WTC11 (cell line): ENCODE measurements at regions of chr13 and their contacts with region 1.

Region 1: GRCh38 chr13:61891401-61891800 is 475.8 kb upstream of the PCDH20 start:
- DNase-seq: no peak
- ATAC-seq: no peak
- H3K4me3 Mint-ChIP-seq: no peak overlapping the region
- H3K27ac Mint-ChIP-seq: 0 out of 2 replicates have a peak overlapping the region, but pooled peaks have one; percentile 79
- H3K4me1 Mint-ChIP-seq: peaks cover 14% of the 10 kb centered on the region
- H3K27me3 Mint-ChIP-seq: no peaks in the 10 kb centered on the region
- CTCF ChIP-seq: no peak

Region 2: GRCh38 chr13:61812286-61812685 is 79.1 kb before region 1 on chr13:
- CTCF ChIA-PET with region 1: no interaction called
- POLR2A ChIA-PET with region 1: no interaction called
- DNase-seq: no peak
- ATAC-seq: no peak
- H3K4me3 Mint-ChIP-seq: no peak overlapping the region
- H3K27ac Mint-ChIP-seq: no peak overlapping the region
- H3K4me1 Mint-ChIP-seq: 0 out of 2 replicates have a peak, but pooled peaks cover 3% of the 10 kb centered on the region
- H3K27me3 Mint-ChIP-seq: no peaks in the 10 kb centered on the region
- CTCF ChIP-seq: no peak

Region 3: GRCh38 chr13:61880578-61881283 is 10.7 kb before region 1 on chr13:
- CTCF ChIA-PET with region 1: interaction called, 12 read pairs
- POLR2A ChIA-PET with region 1: no interaction called
- DNase-seq: peak; percentile 44
- ATAC-seq: peak; percentile 98
- H3K4me3 Mint-ChIP-seq: no peak overlapping the region
- H3K27ac Mint-ChIP-seq: no peak overlapping the region
- H3K4me1 Mint-ChIP-seq: peaks cover 3% of the 10 kb centered on the region; the same call in 1 of the 2 replicates
- H3K27me3 Mint-ChIP-seq: no peaks in the 10 kb centered on the region; the same call in 1 of the 2 replicates
- CTCF ChIP-seq: peak; percentile 56

Region 4: DNA sequence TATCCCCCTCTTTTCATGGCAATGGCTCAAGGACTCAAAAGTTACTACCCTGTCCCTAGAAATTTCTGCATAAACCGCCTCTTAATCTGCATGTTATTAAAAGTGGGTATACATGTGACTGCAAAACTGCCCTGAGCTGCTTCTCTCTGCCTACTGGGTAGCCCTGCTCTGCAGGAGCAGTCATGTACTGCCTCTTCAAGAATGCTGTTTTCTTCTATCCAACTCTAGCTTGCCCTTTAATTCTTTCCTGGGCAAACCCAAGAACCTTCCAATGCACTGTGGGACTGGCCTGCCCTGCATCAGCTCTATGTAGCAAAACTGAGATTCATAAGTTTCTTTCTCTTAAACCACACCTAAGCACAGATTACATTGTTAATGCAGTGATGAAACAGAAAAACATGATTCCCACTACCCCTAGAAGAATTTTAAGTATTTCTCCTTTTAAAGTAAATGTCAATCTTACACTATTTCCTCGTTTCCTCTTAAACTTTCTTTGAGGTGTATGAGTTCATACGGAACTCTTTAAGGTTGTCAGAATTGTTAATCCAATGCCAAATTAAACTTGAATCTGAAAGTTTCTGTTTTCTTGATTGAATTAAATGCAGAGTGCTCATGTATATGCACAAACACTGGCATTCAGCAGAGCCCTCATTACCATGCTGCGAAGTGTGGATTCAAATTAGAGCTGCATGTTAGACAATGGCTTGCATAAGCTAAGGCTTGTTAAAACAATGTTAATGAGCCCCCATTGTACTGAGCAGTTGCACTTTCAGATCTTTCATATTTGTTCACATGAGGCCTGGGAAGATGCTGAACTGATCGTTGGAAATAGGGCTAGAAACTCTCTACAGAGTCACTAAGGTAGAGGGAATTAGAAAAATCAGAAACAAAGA is 194.2 kb after region 1 on chr13:
- CTCF ChIA-PET with region 1: no interaction called
- POLR2A ChIA-PET with region 1: no interaction called
- DNase-seq: no peak
- ATAC-seq: peak; percentile 92
- H3K4me3 Mint-ChIP-seq: no peak overlapping the region
- H3K27ac Mint-ChIP-seq: peak overlapping the region; percentile 67
- H3K4me1 Mint-ChIP-seq: peaks cover 13% of the 10 kb centered on the region
- H3K27me3 Mint-ChIP-seq: no peaks in the 10 kb centered on the region
- CTCF ChIP-seq: no peak